Endothelial cell of umbilical vein (primary cell): ENCODE measurements at regions of chr12 and their contacts with region 1.

Region 1: GRCh38 chr12:56127888-56128669 is at the start of gene ESYT1:
- DNase-seq: peak; percentile 100
- H3K4me3 ChIP-seq: peak within 1 kb of the TSS; percentile 63 to 75 (median 68)
- H3K27ac ChIP-seq: peak within 1 kb of the TSS; percentile 46
- H3K4me1 ChIP-seq: peaks cover 28% of the 10 kb centered on the region
- H3K27me3 ChIP-seq: no peaks in the 10 kb centered on the region
- CTCF ChIP-seq: no peak
- POLR2A ChIP-seq: peak; percentile 82
- total RNA-seq, gene ESYT1: 133 and 161 TPM in 2 replicates

Region 2: DNA sequence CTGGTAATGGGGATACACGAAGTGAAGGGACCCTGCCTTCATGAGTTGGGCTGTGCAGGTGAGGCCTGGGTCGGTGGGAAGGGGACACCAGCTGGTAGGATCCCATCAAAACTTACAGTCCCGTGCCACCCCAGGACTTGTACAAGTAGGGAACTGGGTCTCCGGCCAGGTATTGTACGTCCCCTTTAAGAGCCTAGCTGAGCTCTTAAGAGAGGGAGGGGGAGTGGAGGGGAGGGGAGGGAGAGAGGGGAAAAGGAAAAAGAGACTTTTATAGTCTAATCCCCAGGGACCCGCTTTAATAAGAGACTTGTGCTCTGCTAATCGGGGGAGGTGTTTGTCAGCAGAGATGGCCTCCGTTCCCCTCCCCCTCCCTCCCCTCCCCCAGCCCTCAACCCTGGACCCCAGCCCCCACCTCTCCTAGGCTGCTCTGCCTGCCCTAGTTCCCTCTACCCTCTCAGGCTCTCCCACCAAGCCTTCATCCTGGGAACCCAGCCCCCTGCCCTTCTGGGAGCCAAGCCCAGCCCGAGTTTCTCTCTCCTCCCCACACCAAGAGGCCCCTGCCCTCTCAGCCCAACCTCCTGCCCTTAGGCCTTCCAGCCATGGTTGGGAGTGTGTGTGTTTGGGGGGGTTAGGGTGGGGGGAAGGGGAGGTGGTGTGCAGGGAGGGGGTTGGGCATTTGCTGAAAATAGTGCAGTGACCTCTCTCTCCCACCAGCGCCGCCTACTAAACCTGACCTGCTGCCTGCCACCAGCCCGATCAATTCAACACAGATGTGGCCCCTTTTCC is 382.5 kb before region 1 on chr12:
- CTCF ChIA-PET with region 1: no interaction called
- POLR2A ChIA-PET with region 1: no interaction called
- dilution Hi-C with region 1: no loop called
- intact Hi-C with region 1: no loop called
- DNase-seq: no peak
- H3K4me3 ChIP-seq: no peak overlapping the region
- H3K27ac ChIP-seq: no peak overlapping the region
- H3K4me1 ChIP-seq: peaks cover 9% of the 10 kb centered on the region
- H3K27me3 ChIP-seq: no peaks in the 10 kb centered on the region
- CTCF ChIP-seq: no peak
- POLR2A ChIP-seq: no peak

Region 3: GRCh38 chr12:56143870-56144269 is 15.8 kb after region 1 on chr12:
- CTCF ChIA-PET with region 1: interaction called, 30 read pairs
- POLR2A ChIA-PET with region 1: interaction called, 7 read pairs
- dilution Hi-C with region 1: no loop called
- intact Hi-C with region 1: no loop called
- DNase-seq: peak; percentile 66
- H3K4me3 ChIP-seq: no peak overlapping the region
- H3K27ac ChIP-seq: peak overlapping the region; percentile 27
- H3K4me1 ChIP-seq: peaks cover 29% of the 10 kb centered on the region
- H3K27me3 ChIP-seq: no peaks in the 10 kb centered on the region
- CTCF ChIP-seq: no peak
- POLR2A ChIP-seq: no peak

Region 4: DNA sequence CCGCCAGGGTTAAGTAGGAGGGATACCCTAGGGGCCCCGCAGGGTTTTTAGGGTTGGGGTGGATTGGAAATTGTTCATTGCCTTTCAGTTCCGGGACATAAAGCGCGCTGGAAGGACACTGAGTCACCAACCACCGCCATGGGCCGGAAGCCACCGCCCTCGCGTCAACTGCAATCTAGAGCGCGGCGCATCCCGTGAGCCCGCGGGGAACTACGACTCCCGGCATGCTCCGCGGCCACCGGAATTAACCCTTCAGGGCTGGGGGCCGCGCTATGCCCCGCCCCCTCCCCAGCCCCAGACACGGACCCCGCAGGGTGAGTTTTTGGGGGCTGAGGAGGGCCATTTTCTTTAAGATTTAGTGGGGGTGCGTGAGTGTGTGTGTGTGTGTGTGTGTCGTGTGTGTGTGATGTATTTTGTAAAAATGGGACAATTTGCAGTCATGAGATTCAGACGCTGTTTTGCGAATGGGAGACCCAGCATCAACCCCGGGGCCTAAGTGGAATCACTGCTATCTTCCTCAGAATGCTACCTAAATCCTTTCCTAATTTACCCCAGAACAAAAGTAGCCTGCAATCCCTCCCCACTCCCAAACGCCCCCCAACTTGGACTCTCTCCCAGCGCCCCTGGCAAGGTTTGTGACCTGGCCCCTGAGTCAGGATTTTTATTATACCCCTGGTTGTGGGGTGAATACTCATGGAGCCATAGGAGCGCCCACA is 24.4 kb after region 1 on chr12 and contains the start of gene MYL6B:
- CTCF ChIA-PET with region 1: interaction called, 6 read pairs
- POLR2A ChIA-PET with region 1: interaction called, 4 read pairs
- dilution Hi-C with region 1: no loop called
- intact Hi-C with region 1: loop called (anchors 1 kb)
- DNase-seq: peak; percentile 91
- H3K4me3 ChIP-seq: peak within 1 kb of the TSS; percentile 60 to 78 (median 71)
- H3K27ac ChIP-seq: peak within 1 kb of the TSS; percentile 51
- H3K4me1 ChIP-seq: peaks cover 19% of the 10 kb centered on the region
- H3K27me3 ChIP-seq: no peaks in the 10 kb centered on the region
- CTCF ChIP-seq: no peak
- POLR2A ChIP-seq: peak; percentile 50
- total RNA-seq, gene MYL6B: 135 and 137 TPM in 2 replicates

Region 5: GRCh38 chr12:56158029-56158925 is 30.2 kb after region 1 on chr12 and contains the start of gene MYL6:
- CTCF ChIA-PET with region 1: interaction called, 17 read pairs
- POLR2A ChIA-PET with region 1: interaction called, 38 read pairs
- dilution Hi-C with region 1: no loop called
- intact Hi-C with region 1: loop called (anchors 1 kb)
- DNase-seq: peak; percentile 96
- H3K4me3 ChIP-seq: peak within 1 kb of the TSS; percentile 78 to 98 (median 91)
- H3K27ac ChIP-seq: peak within 1 kb of the TSS; percentile 87
- H3K4me1 ChIP-seq: peaks cover 25% of the 10 kb centered on the region
- H3K27me3 ChIP-seq: no peaks in the 10 kb centered on the region
- CTCF ChIP-seq: no peak
- POLR2A ChIP-seq: peak; percentile 99
- total RNA-seq, gene MYL6: 2,364 and 2,543 TPM in 2 replicates

Region 6: DNA sequence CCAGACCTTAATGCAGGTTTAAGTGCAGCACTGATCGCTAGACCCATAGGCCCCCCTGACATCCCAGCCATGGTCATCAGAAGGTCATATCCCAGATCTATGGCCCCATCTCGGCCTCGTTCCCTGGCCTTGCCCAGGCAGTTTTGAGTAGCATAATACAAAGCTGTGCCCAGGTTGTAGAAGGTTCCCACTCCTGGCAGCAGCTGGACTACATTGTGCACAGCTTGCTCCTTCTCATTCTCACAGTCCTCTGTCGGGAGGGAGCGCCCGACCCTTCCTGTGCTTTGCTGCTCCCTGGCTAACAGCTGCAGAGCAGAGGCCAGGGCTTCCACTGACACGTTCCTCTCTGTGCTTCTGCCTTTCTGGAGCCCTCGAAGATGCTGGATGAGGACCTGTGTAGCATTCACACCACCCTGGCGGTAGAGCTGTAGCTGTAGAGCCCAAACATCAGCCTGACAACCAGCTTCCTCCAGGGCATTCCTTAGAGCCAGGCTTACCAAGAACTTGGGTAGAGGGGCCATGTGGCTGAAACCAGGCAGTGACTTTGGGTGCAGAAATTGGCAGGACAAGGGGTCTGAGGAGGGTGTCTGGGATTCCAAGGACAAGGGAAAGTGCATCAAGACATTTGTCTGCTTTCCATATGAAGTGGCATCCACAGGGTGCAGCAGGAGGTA is 233.5 kb after region 1 on chr12:
- CTCF ChIA-PET with region 1: no interaction called
- POLR2A ChIA-PET with region 1: no interaction called
- dilution Hi-C with region 1: no loop called
- intact Hi-C with region 1: no loop called
- DNase-seq: no peak
- H3K4me3 ChIP-seq: no peak overlapping the region
- H3K27ac ChIP-seq: no peak overlapping the region
- H3K4me1 ChIP-seq: peaks cover 14% of the 10 kb centered on the region
- H3K27me3 ChIP-seq: no peaks in the 10 kb centered on the region
- CTCF ChIP-seq: no peak
- POLR2A ChIP-seq: no peak